Activated CD4-positive, alpha-beta memory T cell treated with anti-CD3 and anti-CD28 coated beads for 36 hours (primary cell): ENCODE measurements at regions of chr9 and their contacts with region 1.

Region 1: GRCh38 chr9:97220894-97221477 is 86.5 kb upstream of the CCDC180 start:
- DNase-seq: no peak
- H3K4me3 Mint-ChIP-seq: peak overlapping the region; percentile 76
- H3K27ac Mint-ChIP-seq: no peak overlapping the region
- H3K4me1 Mint-ChIP-seq: peaks cover 5% of the 10 kb centered on the region
- H3K27me3 Mint-ChIP-seq: peaks cover 38% of the 10 kb centered on the region

Region 2: GRCh38 chr9:97124256-97124655 is 96.7 kb before region 1 on chr9:
- CTCF ChIA-PET with region 1: no interaction called
- POLR2A ChIA-PET with region 1: no interaction called
- intact Hi-C with region 1: no loop called
- DNase-seq: no peak
- H3K4me3 Mint-ChIP-seq: no peak overlapping the region
- H3K27ac Mint-ChIP-seq: no peak overlapping the region
- H3K4me1 Mint-ChIP-seq: no peaks in the 10 kb centered on the region
- H3K27me3 Mint-ChIP-seq: no peaks in the 10 kb centered on the region

Region 3: DNA sequence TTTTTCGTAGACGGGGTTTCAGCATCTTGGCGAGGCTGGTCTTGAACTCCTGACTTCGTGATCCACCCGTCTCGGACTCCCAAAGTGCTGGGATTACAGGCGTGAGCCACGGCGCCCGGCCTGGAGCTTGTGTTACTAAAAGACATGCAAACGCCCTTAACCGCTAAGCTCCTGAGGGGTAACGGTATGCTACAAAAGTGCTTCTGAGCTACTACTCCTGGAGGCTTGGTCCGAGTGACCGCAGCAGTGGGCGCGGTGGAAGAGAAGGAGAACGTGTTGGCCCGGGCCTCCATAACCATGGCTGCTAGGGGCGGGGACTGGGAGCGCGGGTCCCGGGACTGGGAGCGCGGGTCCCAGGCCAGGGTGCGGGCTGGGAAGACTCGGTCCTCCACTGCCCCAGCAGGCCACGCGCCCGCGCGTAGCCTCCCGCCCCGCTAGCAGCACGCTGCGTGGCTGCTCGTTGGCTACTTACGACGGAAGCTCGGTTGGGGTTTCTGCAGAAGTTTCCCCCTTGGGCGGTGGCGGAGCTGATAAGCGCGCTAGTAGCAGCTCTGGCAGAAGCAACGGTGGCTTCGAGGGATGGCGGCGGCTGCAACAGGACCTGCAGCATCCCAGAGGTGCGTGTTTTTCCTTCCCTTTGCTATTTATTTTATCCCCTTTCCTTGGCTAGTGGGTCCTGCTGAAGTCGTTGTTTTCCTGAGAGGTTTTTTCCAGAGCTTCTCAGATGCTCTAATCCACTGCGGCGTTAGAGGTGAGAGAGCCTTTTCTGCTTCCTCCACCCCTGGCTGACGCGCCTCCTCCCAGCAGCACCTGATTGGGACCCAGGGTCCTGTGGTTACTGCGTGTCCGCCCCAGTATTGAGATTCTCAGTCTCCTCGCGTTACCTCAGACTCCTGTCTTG is 17.2 kb after region 1 on chr9:
- CTCF ChIA-PET with region 1: interaction called, 8 read pairs
- POLR2A ChIA-PET with region 1: interaction called, 7 read pairs
- intact Hi-C with region 1: loop called (anchors 2 kb)
- DNase-seq: peak; percentile 88
- H3K4me3 Mint-ChIP-seq: peak overlapping the region; percentile 95
- H3K27ac Mint-ChIP-seq: peak overlapping the region; percentile 91
- H3K4me1 Mint-ChIP-seq: peaks cover 16% of the 10 kb centered on the region
- H3K27me3 Mint-ChIP-seq: no peaks in the 10 kb centered on the region